ENCODE measurements at regions of chr17 and their contacts with region 1.

Region 1: GRCh38 chr17:6421700-6422604 is 13.0 kb downstream of the AIPL1 start:
- DNase-seq: peak; percentile 63 to 81 (median 79)
- ATAC-seq: peak; percentile 89
- H3K4me3 ChIP-seq: no peak overlapping the region
- H3K4me1 ChIP-seq: no peaks in the 10 kb centered on the region
- CTCF ChIP-seq: peak; percentile 75

Region 2: GRCh38 chr17:5584383-5585286 is 837.3 kb before region 1 on chr17 and contains the start of gene NLRP1:
- intact Hi-C with region 1: loop called in 1 of 2 experiments (anchors 5 kb)
- DNase-seq: peak; percentile 82 to 94 (median 87)
- ATAC-seq: peak; percentile 93
- H3K4me3 ChIP-seq: no peak within 1 kb of the TSS
- H3K4me1 ChIP-seq: peaks cover 7% of the 10 kb centered on the region
- CTCF ChIP-seq: no peak
- total RNA-seq, gene NLRP1: 4.6 to 13.9 (median 8.0) TPM

Region 3: GRCh38 chr17:5592382-5592781 is 829.6 kb before region 1 on chr17:
- intact Hi-C with region 1: loop called (anchors 5 kb)
- DNase-seq: no peak
- ATAC-seq: peak; percentile 33
- H3K4me3 ChIP-seq: no peak overlapping the region
- H3K4me1 ChIP-seq: no peaks in the 10 kb centered on the region
- CTCF ChIP-seq: peak; percentile 25

Region 4: GRCh38 chr17:6361731-6362130 is 60.2 kb before region 1 on chr17:
- intact Hi-C with region 1: no loop called
- DNase-seq: no peak
- ATAC-seq: no peak
- H3K4me3 ChIP-seq: no peak overlapping the region
- H3K4me1 ChIP-seq: no peaks in the 10 kb centered on the region
- CTCF ChIP-seq: no peak

Region 5: DNA sequence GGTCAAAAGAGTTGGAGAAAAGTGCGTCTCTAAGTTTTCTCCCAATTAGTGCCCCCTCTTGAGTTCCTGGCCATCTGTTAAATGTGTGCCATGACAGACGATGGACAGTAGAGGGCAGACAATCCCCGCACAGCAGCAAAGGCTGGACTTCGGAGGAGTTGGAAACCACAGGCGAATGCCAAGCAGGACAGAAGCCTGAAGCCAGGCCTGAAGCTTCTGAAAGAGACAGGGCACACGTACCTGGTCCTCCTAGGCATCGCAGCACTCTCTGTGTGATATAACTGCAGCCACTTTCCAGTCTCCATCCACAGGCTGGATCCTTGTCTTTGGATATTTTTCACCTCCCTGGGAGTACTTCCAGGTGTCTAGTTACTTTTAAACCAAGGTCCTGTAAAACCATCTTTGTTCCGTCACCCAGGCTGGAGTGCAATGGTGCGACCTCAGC is 244.1 kb after region 1 on chr17:
- intact Hi-C with region 1: no loop called
- DNase-seq: peak in 2 of 3 donors; percentile 63 to 68
- ATAC-seq: peak; percentile 97
- H3K4me3 ChIP-seq: no peak overlapping the region
- H3K4me1 ChIP-seq: no peaks in the 10 kb centered on the region
- CTCF ChIP-seq: peak; percentile 67

Measured in mucosa of descending colon (tissue), 3 donors.